ENCODE measurements at regions of chr10 and their contacts with region 1.

Region 1: GRCh38 chr10:71285180-71285545 is 33.9 kb upstream of the SLC29A3 start:
- DNase-seq: peak in 1 of 2 experiments; percentile 85
- H3K4me3 ChIP-seq: no peak overlapping the region
- H3K27ac ChIP-seq: no peak overlapping the region
- H3K4me1 ChIP-seq: no peaks in the 10 kb centered on the region
- H3K27me3 ChIP-seq: no peaks in the 10 kb centered on the region
- CTCF ChIP-seq: peak; percentile 80 to 85 (median 85)
- EP300 ChIP-seq: no peak
- POLR2A ChIP-seq: no peak
- RAD21 ChIP-seq: peak; percentile 91

Region 2: DNA sequence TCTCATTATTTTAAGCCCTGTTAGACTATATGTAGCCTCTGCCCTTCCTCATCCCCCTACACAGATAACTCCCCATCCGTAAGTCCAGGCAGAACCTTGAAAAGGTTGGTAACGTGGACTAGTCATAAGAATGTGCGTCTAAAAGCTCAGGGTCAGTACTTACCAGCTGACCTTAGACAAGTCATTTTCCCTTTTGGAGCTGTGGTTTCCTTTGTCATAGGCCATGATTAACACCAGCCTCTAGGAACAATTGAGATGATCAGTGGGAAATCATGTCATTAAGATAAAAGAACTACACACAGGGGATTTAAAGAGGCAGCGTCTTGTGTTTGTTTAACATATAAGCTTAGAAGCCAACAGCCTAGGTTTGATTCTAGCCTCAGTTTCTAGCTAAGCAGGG is 79.7 kb before region 1 on chr10:
- CTCF ChIA-PET with region 1: interaction called, 13 read pairs
- POLR2A ChIA-PET with region 1: no interaction called
- DNase-seq: no peak
- H3K4me3 ChIP-seq: no peak overlapping the region
- H3K27ac ChIP-seq: no peak overlapping the region
- H3K4me1 ChIP-seq: peaks cover 0 to 9% (median 4%) of the 10 kb centered on the region in 4 experiments; a peak in 5 of 7 replicates
- H3K27me3 ChIP-seq: peaks cover 1 to 11% (median 7%) of the 10 kb centered on the region in 4 experiments
- CTCF ChIP-seq: no peak
- EP300 ChIP-seq: no peak
- POLR2A ChIP-seq: no peak
- RAD21 ChIP-seq: no peak

Region 3: GRCh38 chr10:71234970-71235685 is 50.0 kb before region 1 on chr10:
- CTCF ChIA-PET with region 1: interaction called, 15 read pairs
- POLR2A ChIA-PET with region 1: no interaction called
- DNase-seq: no peak
- H3K4me3 ChIP-seq: no peak overlapping the region
- H3K27ac ChIP-seq: no peak overlapping the region
- H3K4me1 ChIP-seq: peaks cover 7 to 17% (median 13%) of the 10 kb centered on the region in 4 experiments
- H3K27me3 ChIP-seq: 0 out of 7 replicates have a peak, but pooled peaks cover 0 to 2% (median 0%) of the 10 kb centered on the region in 4 experiments
- CTCF ChIP-seq: no peak
- EP300 ChIP-seq: no peak
- POLR2A ChIP-seq: no peak
- RAD21 ChIP-seq: no peak

Region 4: DNA sequence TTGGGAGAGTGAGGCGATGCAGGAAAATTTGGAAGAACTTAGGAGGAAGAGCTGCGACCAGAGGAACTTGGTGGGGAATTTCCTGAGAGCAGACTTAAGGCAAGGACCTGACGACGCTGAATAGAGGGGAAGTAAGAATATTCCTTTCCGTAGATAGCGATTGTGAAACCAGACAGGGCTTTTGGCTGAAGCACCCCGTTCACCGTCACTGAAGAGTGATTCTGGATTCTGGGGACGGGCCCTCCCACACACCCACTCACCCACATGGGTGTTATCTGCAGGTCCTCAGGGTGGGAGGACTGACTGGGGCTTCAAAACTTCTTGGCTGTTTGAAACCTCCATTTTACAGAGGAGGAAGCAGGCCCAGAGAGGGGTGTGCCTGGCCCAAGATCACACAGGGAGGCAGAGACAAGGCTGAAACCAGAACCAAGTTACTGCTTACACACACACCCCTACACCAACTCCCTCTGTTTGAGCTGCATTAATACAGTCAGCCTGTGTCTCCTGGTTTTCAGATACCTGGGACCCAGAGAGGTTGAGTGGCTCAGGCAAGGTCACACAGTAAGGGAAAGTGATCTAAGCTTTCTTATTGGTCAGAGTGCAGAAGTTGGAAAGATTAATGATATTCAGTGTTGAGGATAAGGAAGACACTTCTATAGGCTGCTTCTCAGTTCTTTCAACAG is 74.3 kb after region 1 on chr10:
- CTCF ChIA-PET with region 1: no interaction called
- POLR2A ChIA-PET with region 1: no interaction called
- DNase-seq: no peak
- H3K4me3 ChIP-seq: no peak overlapping the region
- H3K27ac ChIP-seq: no peak overlapping the region
- H3K4me1 ChIP-seq: no peaks in the 10 kb centered on the region
- H3K27me3 ChIP-seq: no peaks in the 10 kb centered on the region
- CTCF ChIP-seq: no peak
- EP300 ChIP-seq: no peak
- POLR2A ChIP-seq: no peak
- RAD21 ChIP-seq: no peak

Region 5: DNA sequence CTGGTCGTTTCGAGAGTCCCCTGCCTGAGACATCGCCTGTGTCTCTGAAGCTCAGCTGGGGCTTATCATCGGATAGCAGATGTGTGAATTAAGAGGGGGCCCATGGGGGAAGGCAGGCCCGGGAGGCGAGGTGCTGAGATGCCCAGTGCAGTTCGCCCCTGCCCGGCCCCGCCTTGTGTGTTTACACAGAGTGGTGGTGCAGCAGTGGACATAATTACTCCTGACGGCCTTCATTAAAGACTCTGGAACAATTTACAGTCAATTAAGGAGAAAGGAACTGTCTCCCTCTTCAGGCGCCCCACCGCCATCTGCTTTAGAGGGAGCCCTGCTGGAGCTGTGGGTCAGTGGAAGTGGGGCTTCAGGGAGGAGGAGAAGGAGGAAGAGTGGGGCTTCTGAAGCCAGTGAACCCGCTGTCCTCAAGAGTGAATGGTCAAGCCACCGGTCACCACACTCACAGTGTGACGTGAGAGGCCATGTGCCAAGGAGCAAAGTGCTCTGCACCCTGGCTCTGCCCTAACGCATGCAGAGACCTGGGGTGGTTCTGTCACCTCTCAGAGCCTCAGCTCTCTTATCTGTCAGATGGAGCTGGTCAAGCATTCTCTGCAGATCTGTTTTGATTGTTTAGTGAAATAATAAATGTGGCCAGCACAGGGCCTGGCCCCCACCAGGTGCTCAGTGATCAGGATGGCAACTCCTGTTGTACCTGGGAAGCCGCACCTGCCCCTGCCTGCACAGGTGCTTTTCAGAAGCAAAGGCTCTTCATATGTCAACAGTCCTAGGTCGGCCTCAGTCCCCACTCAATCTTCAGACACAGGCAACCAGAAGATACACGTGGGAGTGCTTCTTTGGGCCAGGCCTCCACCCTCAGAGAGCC is 177.1 kb after region 1 on chr10:
- CTCF ChIA-PET with region 1: no interaction called
- POLR2A ChIA-PET with region 1: no interaction called
- DNase-seq: no peak
- H3K4me3 ChIP-seq: no peak overlapping the region
- H3K27ac ChIP-seq: no peak overlapping the region
- H3K4me1 ChIP-seq: peaks cover 0 to 2% (median 0%) of the 10 kb centered on the region in 4 experiments; a peak in 1 of 7 replicates
- H3K27me3 ChIP-seq: no peaks in the 10 kb centered on the region
- CTCF ChIP-seq: no peak; a peak in 1 of 4 replicates
- EP300 ChIP-seq: no peak
- POLR2A ChIP-seq: no peak
- RAD21 ChIP-seq: peak in 1 of 2 experiments; percentile 27; a peak in 2 of 4 replicates

Measured in H1 (cell line).